ENCODE measurements at regions of chr22 and their contacts with region 1.

Region 1: GRCh38 chr22:28594797-28595462 is 84.7 kb downstream of the TTC28 start:
- DNase-seq: no peak
- H3K4me3 ChIP-seq: no peak overlapping the region
- H3K27ac ChIP-seq: no peak overlapping the region
- H3K4me1 ChIP-seq: peaks cover 0 to 7% (median 2%) of the 10 kb centered on the region in 6 donors
- H3K27me3 ChIP-seq: no peaks in the 10 kb centered on the region
- CTCF ChIP-seq: peak; percentile 11 to 74 (median 60)
- POLR2A ChIP-seq: no peak

Region 2: GRCh38 chr22:27880778-27881394 is 714.0 kb before region 1 on chr22:
- intact Hi-C with region 1: loop called (anchors 10 kb)
- DNase-seq: no peak
- H3K4me3 ChIP-seq: no peak overlapping the region
- H3K27ac ChIP-seq: no peak overlapping the region
- H3K4me1 ChIP-seq: peaks cover 12 to 50% (median 33%) of the 10 kb centered on the region in 6 donors
- H3K27me3 ChIP-seq: no peaks in the 10 kb centered on the region
- CTCF ChIP-seq: peak; percentile 27 to 78 (median 70)
- POLR2A ChIP-seq: no peak

Region 3: GRCh38 chr22:28051787-28052356 is 543.1 kb before region 1 on chr22:
- intact Hi-C with region 1: loop called (anchors 10 kb)
- DNase-seq: no peak
- H3K4me3 ChIP-seq: no peak overlapping the region
- H3K27ac ChIP-seq: peak overlapping the region in 3 of 8 donors; percentile 26 to 29 (median 27)
- H3K4me1 ChIP-seq: peaks cover 0 to 32% (median 7%) of the 10 kb centered on the region in 6 donors
- H3K27me3 ChIP-seq: no peaks in the 10 kb centered on the region
- CTCF ChIP-seq: peak in 8 of 11 experiments; percentile 49 to 73 (median 65)
- POLR2A ChIP-seq: no peak

Region 4: DNA sequence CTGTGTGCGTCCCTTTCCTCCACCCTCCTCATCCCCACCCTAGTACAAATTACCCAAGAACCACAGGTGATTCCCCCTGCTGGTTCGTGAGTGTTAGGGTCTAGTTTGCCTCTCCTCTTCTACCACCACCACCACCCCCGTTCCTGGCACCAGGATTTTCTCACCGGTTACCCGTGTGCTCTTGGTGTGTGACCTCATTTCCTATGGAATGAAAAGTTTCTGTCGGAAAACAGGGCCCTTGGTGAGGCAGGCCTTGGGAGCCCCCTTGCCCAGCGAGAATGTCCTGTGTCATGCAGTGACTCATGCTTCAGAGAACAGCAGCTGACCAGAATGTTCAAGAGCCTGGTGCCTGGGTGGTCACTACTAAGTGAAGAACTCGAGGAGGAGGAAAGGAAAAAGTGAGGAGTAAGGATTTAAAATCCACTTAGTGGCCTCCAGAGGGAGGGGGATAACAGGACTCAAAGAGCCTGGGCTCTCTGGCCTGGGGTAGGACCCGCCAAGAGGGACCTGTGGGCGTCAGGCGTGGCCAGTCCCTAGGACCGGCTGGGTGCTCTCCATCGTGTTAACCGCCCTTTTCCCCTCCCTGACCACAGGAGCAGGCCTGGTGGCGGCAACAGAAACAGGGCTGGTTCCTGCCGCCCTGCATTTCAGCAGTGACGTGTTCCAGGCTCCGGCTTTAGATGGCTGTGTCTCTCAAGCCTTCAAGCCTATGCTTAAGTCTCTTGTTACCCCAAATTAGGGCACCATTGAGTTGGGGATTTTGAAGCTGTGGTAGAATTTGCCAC is 436.5 kb after region 1 on chr22:
- intact Hi-C with region 1: loop called (anchors 5 kb)
- DNase-seq: no peak
- H3K4me3 ChIP-seq: peak overlapping the region in 3 of 8 donors; percentile 31 to 60 (median 40)
- H3K27ac ChIP-seq: peak overlapping the region; percentile 71 to 87 (median 80)
- H3K4me1 ChIP-seq: peaks cover 0 to 34% (median 27%) of the 10 kb centered on the region in 6 donors
- H3K27me3 ChIP-seq: peaks cover 0 to 39% (median 19%) of the 10 kb centered on the region in 7 donors
- CTCF ChIP-seq: no peak
- POLR2A ChIP-seq: no peak